Activated CD8-positive, alpha-beta T cell treated with anti-CD3 and anti-CD28 coated beads for 36 hours (primary cell): ENCODE measurements at regions of chr1 and their contacts with region 1.

Region 1: DNA sequence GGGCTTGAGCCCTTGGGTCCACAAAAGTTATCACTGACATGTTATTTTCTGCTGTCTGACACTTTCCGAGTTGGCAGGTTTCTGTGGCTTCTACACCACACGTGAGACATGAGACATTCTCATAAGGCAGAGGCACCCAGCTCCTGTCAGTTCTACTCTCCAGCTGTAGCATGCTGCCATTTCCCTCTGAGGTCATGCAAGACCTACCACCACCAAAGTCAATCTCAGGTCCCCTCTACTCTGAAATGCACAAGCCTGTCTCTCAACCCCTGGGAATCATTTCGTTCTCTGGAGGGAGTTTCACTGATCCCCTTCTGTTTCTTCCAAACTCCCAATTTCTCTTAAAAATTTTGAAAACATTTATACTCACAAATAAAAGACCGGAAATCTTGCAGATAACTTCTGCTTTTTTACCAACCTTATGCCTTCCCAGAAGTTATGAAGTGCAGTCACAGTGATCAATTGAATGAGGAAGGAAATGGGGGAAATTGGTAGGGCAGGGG is 39.5 kb upstream of the CR2 start:
- DNase-seq: peak; percentile 84
- ATAC-seq: peak; percentile 72
- H3K4me3 Mint-ChIP-seq: no peak overlapping the region
- H3K27ac Mint-ChIP-seq: no peak overlapping the region
- H3K4me1 Mint-ChIP-seq: peaks cover 34% of the 10 kb centered on the region
- H3K27me3 Mint-ChIP-seq: peaks cover 7% of the 10 kb centered on the region
- CTCF ChIP-seq: no peak

Region 2: DNA sequence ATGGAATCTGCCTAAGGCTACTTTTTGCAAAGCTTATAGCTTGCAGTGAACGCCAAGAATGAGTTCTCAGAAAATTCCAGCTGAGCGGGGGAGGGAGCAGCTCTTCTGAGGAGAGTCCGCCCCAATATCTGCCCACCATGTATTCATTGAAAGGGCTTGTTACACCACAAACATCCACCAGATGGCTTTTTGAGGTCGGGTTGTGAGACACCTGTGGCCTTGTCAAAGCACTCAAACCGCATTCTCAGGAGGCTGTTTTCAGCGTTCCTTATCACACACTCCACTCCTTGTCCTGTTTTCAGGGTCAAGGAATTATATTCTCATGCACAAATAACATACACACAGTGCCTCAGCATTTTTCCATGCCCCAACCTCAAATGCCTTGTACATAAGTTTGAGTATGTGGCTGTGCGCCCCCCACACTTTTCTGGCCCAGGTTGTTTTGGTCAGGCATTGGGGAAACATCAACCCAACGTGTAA is 329.9 kb before region 1 on chr1:
- CTCF ChIA-PET with region 1: interaction called, 7 read pairs
- POLR2A ChIA-PET with region 1: no interaction called
- intact Hi-C with region 1: loop called (anchors 2 kb)
- DNase-seq: peak; percentile 73
- ATAC-seq: peak; percentile 83
- H3K4me3 Mint-ChIP-seq: no peak overlapping the region
- H3K27ac Mint-ChIP-seq: no peak overlapping the region
- H3K4me1 Mint-ChIP-seq: peaks cover 25% of the 10 kb centered on the region
- H3K27me3 Mint-ChIP-seq: peaks cover 2% of the 10 kb centered on the region
- CTCF ChIP-seq: peak; percentile 70

Region 3: DNA sequence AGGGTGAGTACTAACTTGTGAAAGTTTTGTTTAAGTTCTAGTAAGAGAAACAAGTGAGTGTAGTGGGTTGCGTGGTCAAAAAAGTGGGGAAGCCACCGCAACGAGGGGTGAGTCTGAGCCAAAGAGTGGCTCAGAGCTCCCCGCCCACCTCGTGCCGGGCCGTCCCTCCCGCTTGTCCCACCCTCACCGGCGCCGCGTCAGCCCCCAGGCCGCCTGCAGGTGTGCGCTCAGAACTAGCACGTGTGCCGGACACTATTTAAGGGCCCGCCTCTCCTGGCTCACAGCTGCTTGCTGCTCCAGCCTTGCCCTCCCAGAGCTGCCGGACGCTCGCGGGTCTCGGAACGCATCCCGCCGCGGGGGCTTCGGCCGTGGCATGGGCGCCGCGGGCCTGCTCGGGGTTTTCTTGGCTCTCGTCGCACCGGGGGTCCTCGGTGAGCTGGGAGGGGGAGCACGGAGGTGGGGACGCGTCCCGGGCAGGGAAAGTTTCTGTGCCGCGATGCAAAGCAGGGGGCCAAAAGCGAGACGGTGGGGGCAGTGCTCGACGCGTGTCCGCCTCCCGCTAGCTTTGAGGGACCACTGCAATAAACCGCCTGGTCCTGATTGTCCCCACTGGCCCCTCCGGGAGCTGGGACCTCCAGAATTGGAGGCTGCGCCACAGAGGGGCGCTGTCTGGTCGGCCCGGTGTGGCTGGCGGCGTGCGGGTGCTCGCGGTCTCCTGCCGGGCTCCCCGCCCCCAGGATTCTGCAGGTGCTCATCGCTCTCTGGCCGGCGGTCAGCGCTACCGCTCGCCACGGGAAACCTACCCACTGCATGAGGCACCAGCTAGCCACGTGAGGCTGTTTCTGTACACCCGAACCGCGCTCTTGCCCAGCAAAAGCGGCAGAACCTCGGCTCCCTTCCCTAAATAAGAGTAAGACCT is 39.6 kb after region 1 on chr1 and contains the start of gene CR2:
- CTCF ChIA-PET with region 1: interaction called, 3 read pairs
- POLR2A ChIA-PET with region 1: no interaction called
- intact Hi-C with region 1: loop called (anchors 5 kb)
- DNase-seq: peak; percentile 80
- ATAC-seq: peak; percentile 85
- H3K4me3 Mint-ChIP-seq: peak within 1 kb of the TSS; percentile 68
- H3K27ac Mint-ChIP-seq: peak within 1 kb of the TSS; percentile 60
- H3K4me1 Mint-ChIP-seq: peaks cover 11% of the 10 kb centered on the region
- H3K27me3 Mint-ChIP-seq: peaks cover 17% of the 10 kb centered on the region
- CTCF ChIP-seq: peak; percentile 63
- total RNA-seq, gene CR2: 1.9 to 2.1 TPM

Region 4: GRCh38 chr1:207779008-207779407 is 364.4 kb after region 1 on chr1:
- CTCF ChIA-PET with region 1: no interaction called
- POLR2A ChIA-PET with region 1: no interaction called
- intact Hi-C with region 1: no loop called
- DNase-seq: no peak
- ATAC-seq: no peak
- H3K4me3 Mint-ChIP-seq: no peak overlapping the region
- H3K27ac Mint-ChIP-seq: no peak overlapping the region
- H3K4me1 Mint-ChIP-seq: peaks cover 25% of the 10 kb centered on the region
- H3K27me3 Mint-ChIP-seq: no peaks in the 10 kb centered on the region
- CTCF ChIP-seq: no peak